ENCODE measurements at regions of chr2 and their contacts with region 1.

Region 1: GRCh38 chr2:54041135-54041534 is 70.3 kb upstream of the PSME4 start:
- DNase-seq: peak; percentile 73
- H3K4me3 Mint-ChIP-seq: no peak overlapping the region
- H3K27ac Mint-ChIP-seq: no peak overlapping the region
- H3K4me1 Mint-ChIP-seq: no peaks in the 10 kb centered on the region
- H3K27me3 Mint-ChIP-seq: no peaks in the 10 kb centered on the region

Region 2: GRCh38 chr2:53913721-53914120 is 127.4 kb before region 1 on chr2:
- CTCF ChIA-PET with region 1: no interaction called
- intact Hi-C with region 1: loop called (anchors 1 kb)
- DNase-seq: peak; percentile 69
- H3K4me3 Mint-ChIP-seq: no peak overlapping the region
- H3K27ac Mint-ChIP-seq: peak overlapping the region; percentile 66
- H3K4me1 Mint-ChIP-seq: peaks cover 15% of the 10 kb centered on the region
- H3K27me3 Mint-ChIP-seq: no peaks in the 10 kb centered on the region

Region 3: DNA sequence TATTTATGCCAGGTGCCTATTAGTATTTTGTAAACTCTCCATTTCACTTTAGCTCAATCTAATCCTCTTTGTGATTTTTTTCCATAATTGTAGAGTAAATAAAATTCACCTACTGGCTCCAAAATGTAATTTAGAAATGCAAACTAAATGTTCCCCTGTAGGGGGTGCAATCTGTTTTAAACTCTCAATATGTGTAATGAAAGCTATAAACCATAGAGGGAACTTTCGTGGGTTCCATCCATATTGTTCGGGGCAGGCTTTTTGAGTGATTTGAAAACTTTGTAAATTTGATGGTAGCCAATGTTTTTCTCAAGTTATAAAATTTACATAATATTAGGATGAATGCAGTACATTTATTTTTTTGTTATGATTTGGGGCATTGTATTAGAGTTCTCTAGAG is 165.5 kb after region 1 on chr2:
- CTCF ChIA-PET with region 1: no interaction called
- intact Hi-C with region 1: no loop called
- DNase-seq: no peak
- H3K4me3 Mint-ChIP-seq: no peak overlapping the region
- H3K27ac Mint-ChIP-seq: no peak overlapping the region
- H3K4me1 Mint-ChIP-seq: peaks cover 3% of the 10 kb centered on the region
- H3K27me3 Mint-ChIP-seq: no peaks in the 10 kb centered on the region

Region 4: GRCh38 chr2:54455563-54456361 is 414.6 kb after region 1 on chr2 and contains the start of gene SPTBN1:
- CTCF ChIA-PET with region 1: no interaction called
- intact Hi-C with region 1: no loop called
- DNase-seq: peak; percentile 34
- H3K4me3 Mint-ChIP-seq: peak within 1 kb of the TSS; percentile 77
- H3K27ac Mint-ChIP-seq: no peak within 1 kb of the TSS
- H3K4me1 Mint-ChIP-seq: peaks cover 13% of the 10 kb centered on the region
- H3K27me3 Mint-ChIP-seq: peaks cover 38% of the 10 kb centered on the region
- total RNA-seq, gene SPTBN1: 103 to 107 TPM